Activated naive CD4-positive, alpha-beta T cell treated with anti-CD3 and anti-CD28 coated beads for 36 hours (primary cell): ENCODE measurements at regions of chr21 and their contacts with region 1.

Region 1: DNA sequence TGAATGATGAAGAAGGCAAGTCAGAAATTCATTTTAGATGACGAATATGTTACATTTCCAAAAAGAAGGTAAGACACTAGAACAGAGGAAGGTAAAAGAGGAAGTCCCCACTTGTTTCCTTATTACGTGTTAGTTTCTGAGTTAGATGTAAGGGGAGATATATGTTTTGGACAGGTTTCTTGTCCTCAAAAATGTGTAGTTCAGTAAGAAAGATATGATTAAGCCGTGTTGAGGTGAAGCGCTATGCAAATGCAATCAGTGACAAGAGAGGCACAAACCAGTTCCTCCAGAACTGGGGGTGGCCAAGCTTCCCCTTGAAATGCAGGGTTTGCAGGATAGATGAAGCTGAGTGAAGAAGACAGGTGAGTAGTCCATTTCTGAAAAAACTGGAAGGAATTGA is 293.3 kb upstream of the RUNX1 start:
- DNase-seq: peak; percentile 68
- H3K4me3 Mint-ChIP-seq: peak overlapping the region; percentile 39
- H3K27ac Mint-ChIP-seq: peak overlapping the region; percentile 93
- H3K4me1 Mint-ChIP-seq: peaks cover 42% of the 10 kb centered on the region
- H3K27me3 Mint-ChIP-seq: peaks cover 4% of the 10 kb centered on the region

Region 2: DNA sequence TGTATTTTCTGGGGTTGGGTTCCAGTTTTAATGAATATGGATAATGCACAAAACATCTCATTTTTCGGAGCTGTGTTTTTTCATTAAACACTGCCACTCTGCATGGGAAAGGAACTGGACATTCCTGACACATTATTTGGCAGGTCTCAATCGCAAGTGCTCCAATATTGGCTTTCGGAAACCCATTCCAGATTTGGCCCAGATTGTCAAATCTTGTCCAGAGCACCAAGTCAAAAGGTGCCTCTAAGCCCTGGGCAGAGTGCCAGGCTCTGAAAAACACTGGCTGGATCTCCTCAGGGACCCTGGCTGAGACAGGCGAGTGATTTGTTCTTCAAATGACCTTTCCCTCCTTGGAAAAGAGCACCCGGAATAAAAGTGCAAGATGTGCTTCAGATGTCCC is 1337.5 kb before region 1 on chr21:
- CTCF ChIA-PET with region 1: no interaction called
- intact Hi-C with region 1: no loop called
- DNase-seq: no peak
- H3K4me3 Mint-ChIP-seq: no peak overlapping the region
- H3K27ac Mint-ChIP-seq: no peak overlapping the region
- H3K4me1 Mint-ChIP-seq: peaks cover 12% of the 10 kb centered on the region
- H3K27me3 Mint-ChIP-seq: no peaks in the 10 kb centered on the region

Region 3: GRCh38 chr21:34967509-34968289 is 374.7 kb before region 1 on chr21:
- CTCF ChIA-PET with region 1: no interaction called
- intact Hi-C with region 1: loop called (anchors 2 kb)
- DNase-seq: peak; percentile 73
- H3K4me3 Mint-ChIP-seq: peak overlapping the region; percentile 47
- H3K27ac Mint-ChIP-seq: peak overlapping the region; percentile 93
- H3K4me1 Mint-ChIP-seq: peaks cover 84% of the 10 kb centered on the region
- H3K27me3 Mint-ChIP-seq: no peaks in the 10 kb centered on the region

Region 4: DNA sequence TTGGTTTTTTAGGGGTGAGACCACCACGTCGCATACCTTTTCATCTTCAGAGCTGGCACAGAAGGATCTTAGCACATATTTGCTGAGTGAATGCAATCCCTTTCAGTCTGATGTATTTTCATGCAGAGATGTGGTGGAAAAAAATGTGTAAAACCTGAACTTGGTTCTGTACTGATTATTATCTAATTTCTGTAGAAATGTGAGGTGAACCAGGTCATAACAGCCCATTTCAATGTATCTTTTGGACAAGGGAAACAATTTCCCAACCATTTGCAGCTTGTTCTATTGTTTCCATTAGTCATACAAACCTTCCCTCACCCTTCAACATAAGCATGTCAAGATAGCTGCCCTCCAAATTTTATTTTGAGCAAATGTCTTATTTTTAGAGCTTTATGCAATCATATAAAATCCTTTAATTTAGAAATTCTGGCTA is 246.6 kb before region 1 on chr21:
- CTCF ChIA-PET with region 1: no interaction called
- intact Hi-C with region 1: loop called (anchors 1 kb)
- DNase-seq: no peak
- H3K4me3 Mint-ChIP-seq: no peak overlapping the region
- H3K27ac Mint-ChIP-seq: no peak overlapping the region
- H3K4me1 Mint-ChIP-seq: peaks cover 32% of the 10 kb centered on the region
- H3K27me3 Mint-ChIP-seq: no peaks in the 10 kb centered on the region

Region 5: DNA sequence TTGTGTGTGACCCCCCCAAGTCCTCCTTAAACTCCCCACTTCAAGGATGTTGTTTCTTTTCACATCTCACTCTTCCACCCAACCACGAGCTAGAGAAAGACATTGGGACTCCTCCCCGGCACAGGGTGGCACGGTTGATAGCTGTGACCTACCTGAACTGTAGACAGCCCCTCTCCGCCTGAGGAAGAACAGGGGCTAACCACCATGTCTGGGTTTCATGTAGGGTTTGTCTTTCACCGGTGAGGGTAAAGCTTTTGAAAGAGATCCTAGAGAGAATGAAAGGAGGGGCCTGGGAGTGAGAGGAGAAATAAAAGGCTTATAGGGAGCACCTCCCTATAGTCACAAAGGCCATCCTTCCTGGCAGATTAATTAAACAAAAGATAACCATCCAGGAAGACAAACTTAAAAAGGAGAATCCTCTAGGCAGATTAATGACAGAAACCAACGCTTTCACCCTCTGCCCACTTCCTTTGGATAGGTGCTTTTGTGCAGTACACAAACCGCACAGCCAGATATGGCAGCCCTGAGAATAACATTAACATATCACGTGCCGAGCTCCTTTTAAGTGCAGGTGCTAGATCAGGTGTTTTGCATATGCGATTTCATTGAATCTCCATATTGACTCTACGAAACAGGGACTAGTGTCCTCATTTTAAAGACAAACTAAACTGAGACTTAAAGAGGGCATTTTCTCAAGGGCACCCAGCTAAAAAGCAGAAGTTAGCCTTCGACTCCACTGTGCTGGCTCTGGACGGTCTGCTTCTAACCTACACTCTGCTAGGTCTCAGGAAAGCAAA is 115.3 kb before region 1 on chr21:
- CTCF ChIA-PET with region 1: interaction called, 3 read pairs
- intact Hi-C with region 1: loop called (anchors 1 kb)
- DNase-seq: peak; percentile 87
- H3K4me3 Mint-ChIP-seq: peak overlapping the region; percentile 66
- H3K27ac Mint-ChIP-seq: peak overlapping the region; percentile 87
- H3K4me1 Mint-ChIP-seq: peaks cover 39% of the 10 kb centered on the region
- H3K27me3 Mint-ChIP-seq: no peaks in the 10 kb centered on the region

Region 6: GRCh38 chr21:35358008-35358407 is 15.6 kb after region 1 on chr21:
- CTCF ChIA-PET with region 1: interaction called, 4 read pairs
- intact Hi-C with region 1: loop called (anchors 1 kb)
- DNase-seq: no peak
- H3K4me3 Mint-ChIP-seq: no peak overlapping the region
- H3K27ac Mint-ChIP-seq: peak overlapping the region; percentile 68
- H3K4me1 Mint-ChIP-seq: peaks cover 13% of the 10 kb centered on the region
- H3K27me3 Mint-ChIP-seq: no peaks in the 10 kb centered on the region